Naive thymus-derived CD4-positive, alpha-beta T cell (primary cell): ENCODE measurements at regions of chr10 and their contacts with region 1.

Region 1: GRCh38 chr10:96831867-96832720 is at the start of gene LCOR:
- DNase-seq: peak; percentile 75 to 88 (median 84)
- ATAC-seq: peak; percentile 85
- H3K4me3 ChIP-seq: peak within 1 kb of the TSS; percentile 65
- H3K4me3 Mint-ChIP-seq: peak within 1 kb of the TSS; percentile 84 to 96 (median 93)
- H3K27ac ChIP-seq: peak within 1 kb of the TSS; percentile 88
- H3K27ac Mint-ChIP-seq: peak within 1 kb of the TSS; percentile 88 to 99 (median 94)
- H3K4me1 ChIP-seq: peaks cover 25 to 26% of the 10 kb centered on the region in 2 donors
- H3K4me1 Mint-ChIP-seq: peaks cover 36 to 57% (median 51%) of the 10 kb centered on the region in 7 donors
- H3K27me3 ChIP-seq: no peaks in the 10 kb centered on the region
- H3K27me3 Mint-ChIP-seq: peaks cover 0 to 8% (median 0%) of the 10 kb centered on the region in 5 donors
- total RNA-seq, gene LCOR: 25.3 to 55.9 (median 51.8) TPM

Region 2: GRCh38 chr10:96043033-96043932 is 788.8 kb before region 1 on chr10 and contains the start of gene CCNJ:
- CTCF ChIA-PET with region 1: no interaction called
- POLR2A ChIA-PET with region 1: no interaction called
- intact Hi-C with region 1: loop called (anchors 2 to 5 kb)
- DNase-seq: peak; percentile 76 to 87 (median 83)
- ATAC-seq: peak; percentile 91
- H3K4me3 ChIP-seq: peak within 1 kb of the TSS; percentile 78
- H3K4me3 Mint-ChIP-seq: peak within 1 kb of the TSS; percentile 83 to 96 (median 92)
- H3K27ac ChIP-seq: peak within 1 kb of the TSS; percentile 81
- H3K27ac Mint-ChIP-seq: peak within 1 kb of the TSS; percentile 80 to 96 (median 87)
- H3K4me1 ChIP-seq: peaks cover 13 to 16% of the 10 kb centered on the region in 2 donors
- H3K4me1 Mint-ChIP-seq: peaks cover 32 to 50% (median 44%) of the 10 kb centered on the region in 7 donors
- H3K27me3 ChIP-seq: peaks cover 3 to 4% of the 10 kb centered on the region in 2 donors
- H3K27me3 Mint-ChIP-seq: peaks cover 4 to 11% (median 8%) of the 10 kb centered on the region in 5 donors
- total RNA-seq, gene CCNJ: 5.6 to 8.0 (median 6.7) TPM

Region 3: GRCh38 chr10:96513698-96514561 is 318.2 kb before region 1 on chr10 and contains the start of gene TLL2:
- CTCF ChIA-PET with region 1: no interaction called
- POLR2A ChIA-PET with region 1: no interaction called
- intact Hi-C with region 1: loop called in 1 of 2 experiments (anchors 2 kb)
- DNase-seq: peak; percentile 1 to 74 (median 33)
- ATAC-seq: peak; percentile 83
- H3K4me3 ChIP-seq: peak within 1 kb of the TSS; percentile 48
- H3K4me3 Mint-ChIP-seq: peak within 1 kb of the TSS; percentile 75 to 86 (median 80)
- H3K27ac ChIP-seq: no peak within 1 kb of the TSS
- H3K27ac Mint-ChIP-seq: peak within 1 kb of the TSS in 1 of 9 donors; percentile 37
- H3K4me1 ChIP-seq: peaks cover 0 to 9% of the 10 kb centered on the region in 2 donors
- H3K4me1 Mint-ChIP-seq: peaks cover 8 to 24% (median 18%) of the 10 kb centered on the region in 7 donors
- H3K27me3 ChIP-seq: peaks cover 0 to 6% of the 10 kb centered on the region in 2 donors
- H3K27me3 Mint-ChIP-seq: peaks cover 29 to 61% (median 36%) of the 10 kb centered on the region in 5 donors
- total RNA-seq, gene TLL2: 0.24 TPM in 1 of 5 experiments, not detected in the others

Region 4: GRCh38 chr10:96789571-96790108 is 42.5 kb before region 1 on chr10:
- CTCF ChIA-PET with region 1: no interaction called
- POLR2A ChIA-PET with region 1: no interaction called
- intact Hi-C with region 1: loop called in 1 of 2 experiments (anchors 1 kb)
- DNase-seq: peak in 3 of 9 donors; percentile 39 to 65 (median 57)
- ATAC-seq: peak; percentile 90
- H3K4me3 ChIP-seq: no peak overlapping the region
- H3K4me3 Mint-ChIP-seq: no peak overlapping the region
- H3K27ac ChIP-seq: no peak overlapping the region
- H3K27ac Mint-ChIP-seq: no peak overlapping the region
- H3K4me1 ChIP-seq: no peaks in the 10 kb centered on the region
- H3K4me1 Mint-ChIP-seq: peaks cover 0 to 2% (median 0%) of the 10 kb centered on the region in 7 donors
- H3K27me3 ChIP-seq: no peaks in the 10 kb centered on the region
- H3K27me3 Mint-ChIP-seq: peaks cover 18 to 30% (median 28%) of the 10 kb centered on the region in 5 donors

Region 5: GRCh38 chr10:96850825-96851224 is 18.7 kb after region 1 on chr10:
- CTCF ChIA-PET with region 1: no interaction called
- POLR2A ChIA-PET with region 1: no interaction called
- intact Hi-C with region 1: no loop called
- DNase-seq: no peak
- ATAC-seq: no peak
- H3K4me3 ChIP-seq: no peak overlapping the region
- H3K4me3 Mint-ChIP-seq: no peak overlapping the region
- H3K27ac ChIP-seq: no peak overlapping the region
- H3K27ac Mint-ChIP-seq: peak overlapping the region in 2 of 9 donors; percentile 28 to 46
- H3K4me1 ChIP-seq: peaks cover 0 to 5% of the 10 kb centered on the region in 2 donors
- H3K4me1 Mint-ChIP-seq: peaks cover 7 to 74% (median 65%) of the 10 kb centered on the region in 7 donors
- H3K27me3 ChIP-seq: no peaks in the 10 kb centered on the region
- H3K27me3 Mint-ChIP-seq: no peaks in the 10 kb centered on the region

Region 6: GRCh38 chr10:96922978-96923948 is 91.2 kb after region 1 on chr10:
- CTCF ChIA-PET with region 1: no interaction called
- POLR2A ChIA-PET with region 1: no interaction called
- intact Hi-C with region 1: no loop called
- DNase-seq: no peak
- ATAC-seq: no peak
- H3K4me3 ChIP-seq: no peak overlapping the region
- H3K4me3 Mint-ChIP-seq: no peak overlapping the region
- H3K27ac ChIP-seq: no peak overlapping the region
- H3K27ac Mint-ChIP-seq: no peak overlapping the region
- H3K4me1 ChIP-seq: no peaks in the 10 kb centered on the region
- H3K4me1 Mint-ChIP-seq: peaks cover 6 to 44% (median 25%) of the 10 kb centered on the region in 7 donors
- H3K27me3 ChIP-seq: no peaks in the 10 kb centered on the region
- H3K27me3 Mint-ChIP-seq: no peaks in the 10 kb centered on the region

Region 7: DNA sequence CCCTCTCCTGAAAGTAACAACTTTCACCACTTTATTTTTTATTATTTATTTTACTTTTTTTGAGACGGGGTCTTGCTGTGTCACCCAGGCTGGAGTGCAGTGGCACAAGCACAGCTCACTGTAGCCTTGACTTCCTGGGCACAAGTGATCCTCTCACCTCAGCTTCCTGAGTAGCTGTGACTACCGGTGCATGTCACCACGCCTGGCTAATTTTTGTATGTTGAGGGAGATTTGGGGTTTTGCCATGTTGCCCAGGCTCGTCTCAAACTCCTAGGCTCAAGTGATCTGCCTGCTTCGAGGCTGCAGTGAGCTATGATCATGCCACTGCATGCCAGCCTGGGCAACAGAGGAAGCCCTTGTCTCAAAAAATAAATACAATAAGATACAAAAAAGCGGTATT is 368.5 kb after region 1 on chr10:
- CTCF ChIA-PET with region 1: no interaction called
- POLR2A ChIA-PET with region 1: no interaction called
- intact Hi-C with region 1: no loop called
- DNase-seq: no peak
- ATAC-seq: no peak
- H3K4me3 ChIP-seq: no peak overlapping the region
- H3K4me3 Mint-ChIP-seq: no peak overlapping the region
- H3K27ac ChIP-seq: no peak overlapping the region
- H3K27ac Mint-ChIP-seq: no peak overlapping the region
- H3K4me1 ChIP-seq: peaks cover 4% of the 10 kb centered on the region in 2 donors
- H3K4me1 Mint-ChIP-seq: peaks cover 0 to 11% (median 3%) of the 10 kb centered on the region in 7 donors
- H3K27me3 ChIP-seq: no peaks in the 10 kb centered on the region
- H3K27me3 Mint-ChIP-seq: peaks cover 0 to 47% (median 8%) of the 10 kb centered on the region in 5 donors

Region 8: GRCh38 chr10:97334370-97335175 is 502.5 kb after region 1 on chr10 and contains the start of gene FRAT2:
- CTCF ChIA-PET with region 1: no interaction called
- POLR2A ChIA-PET with region 1: no interaction called
- intact Hi-C with region 1: loop called in 1 of 2 experiments (anchors 5 kb)
- DNase-seq: peak; percentile 85 to 96 (median 92)
- ATAC-seq: peak; percentile 94
- H3K4me3 ChIP-seq: peak within 1 kb of the TSS; percentile 78
- H3K4me3 Mint-ChIP-seq: peak within 1 kb of the TSS; percentile 88 to 98 (median 94)
- H3K27ac ChIP-seq: peak within 1 kb of the TSS; percentile 97
- H3K27ac Mint-ChIP-seq: peak within 1 kb of the TSS; percentile 89 to 97 (median 93)
- H3K4me1 ChIP-seq: peaks cover 20 to 24% of the 10 kb centered on the region in 2 donors
- H3K4me1 Mint-ChIP-seq: peaks cover 28 to 48% (median 42%) of the 10 kb centered on the region in 7 donors
- H3K27me3 ChIP-seq: no peaks in the 10 kb centered on the region
- H3K27me3 Mint-ChIP-seq: peaks cover 0 to 36% (median 0%) of the 10 kb centered on the region in 5 donors
- total RNA-seq, gene FRAT2: 9.3 to 39.7 (median 29.8) TPM

Region 9: GRCh38 chr10:98446661-98447221 is 1614.6 kb after region 1 on chr10 and contains the start of gene HPS1:
- CTCF ChIA-PET with region 1: no interaction called
- POLR2A ChIA-PET with region 1: no interaction called
- intact Hi-C with region 1: loop called in 1 of 2 experiments (anchors 5 kb)
- DNase-seq: peak; percentile 60 to 88 (median 79)
- ATAC-seq: peak; percentile 93
- H3K4me3 ChIP-seq: peak within 1 kb of the TSS; percentile 87
- H3K4me3 Mint-ChIP-seq: peak within 1 kb of the TSS; percentile 76 to 96 (median 92)
- H3K27ac ChIP-seq: peak within 1 kb of the TSS; percentile 88
- H3K27ac Mint-ChIP-seq: peak within 1 kb of the TSS; percentile 75 to 97 (median 89)
- H3K4me1 ChIP-seq: peaks cover 19 to 21% of the 10 kb centered on the region in 2 donors
- H3K4me1 Mint-ChIP-seq: peaks cover 18 to 56% (median 44%) of the 10 kb centered on the region in 7 donors
- H3K27me3 ChIP-seq: no peaks in the 10 kb centered on the region
- H3K27me3 Mint-ChIP-seq: peaks cover 0 to 20% (median 6%) of the 10 kb centered on the region in 5 donors
- total RNA-seq, gene HPS1: 68.5 to 107 (median 90.9) TPM